Esophagus muscularis mucosa (tissue), 4 donors: ENCODE measurements at regions of chr3 and their contacts with region 1.

Region 1: DNA sequence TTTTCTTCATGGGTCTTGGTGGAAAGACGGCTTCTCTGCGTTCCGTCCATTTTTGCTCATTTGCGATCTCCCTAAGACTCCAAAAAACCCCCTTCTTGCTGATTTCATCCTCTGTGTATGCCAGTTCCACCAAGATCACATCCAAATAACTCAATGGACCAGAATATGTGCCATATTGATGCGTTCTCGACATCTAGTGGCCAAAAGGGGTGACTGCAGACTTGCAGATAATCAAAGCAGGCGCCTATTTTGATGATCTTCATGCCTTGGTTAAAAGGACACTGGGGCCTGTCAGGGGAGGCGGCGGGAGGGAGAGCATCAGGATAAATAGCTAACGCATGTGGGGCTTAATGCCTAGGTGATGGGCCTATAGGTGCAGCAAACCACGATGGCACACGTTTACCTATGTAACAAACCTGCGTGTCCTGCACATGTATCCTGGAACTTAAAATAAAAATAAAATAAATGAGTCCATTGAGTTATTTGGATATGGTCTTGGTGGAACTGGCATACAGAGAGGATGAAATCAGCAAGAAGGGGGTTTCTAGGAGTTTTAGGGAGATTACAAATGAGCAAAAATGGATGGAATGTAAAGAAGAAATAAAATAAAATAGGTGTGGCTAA is 104.2 kb upstream of the RAD18 start:
- DNase-seq: no peak
- H3K4me3 ChIP-seq: no peak overlapping the region
- H3K27ac ChIP-seq: peak overlapping the region in 1 of 4 donors; percentile 36
- H3K4me1 ChIP-seq: peaks cover 7 to 17% (median 12%) of the 10 kb centered on the region in 4 donors
- H3K27me3 ChIP-seq: no peaks in the 10 kb centered on the region
- CTCF ChIP-seq: peak; percentile 82 to 95 (median 92)
- EP300 ChIP-seq: no peak
- POLR2A ChIP-seq: no peak

Region 2: DNA sequence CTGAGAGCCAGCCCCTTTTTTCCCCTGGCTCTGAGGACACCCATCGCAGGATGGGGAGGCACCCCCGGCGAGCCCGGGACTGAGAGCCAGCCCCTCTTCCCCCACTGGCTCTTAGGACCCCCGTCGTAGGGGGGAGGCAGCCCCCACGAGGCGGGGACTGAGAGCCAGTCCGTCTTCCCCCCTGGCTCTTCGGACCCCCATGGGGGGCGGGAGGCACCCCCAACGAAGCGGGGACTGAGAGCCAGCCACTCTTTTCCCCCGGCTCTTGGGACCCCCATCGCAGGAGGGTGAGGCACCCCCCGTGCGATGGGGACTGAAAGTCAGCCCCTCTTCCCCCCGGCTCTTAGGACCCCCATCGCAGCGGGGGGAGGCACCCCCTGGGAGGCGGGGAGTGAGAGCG is 386.1 kb before region 1 on chr3:
- intact Hi-C with region 1: no loop called
- DNase-seq: no peak
- H3K4me3 ChIP-seq: peak overlapping the region in 2 of 4 donors; percentile 5 to 12
- H3K27ac ChIP-seq: no peak overlapping the region
- H3K4me1 ChIP-seq: peaks cover 0 to 8% (median 4%) of the 10 kb centered on the region in 4 donors
- H3K27me3 ChIP-seq: peaks cover 0 to 32% (median 0%) of the 10 kb centered on the region in 4 donors
- CTCF ChIP-seq: no peak
- EP300 ChIP-seq: no peak
- POLR2A ChIP-seq: no peak

Region 3: DNA sequence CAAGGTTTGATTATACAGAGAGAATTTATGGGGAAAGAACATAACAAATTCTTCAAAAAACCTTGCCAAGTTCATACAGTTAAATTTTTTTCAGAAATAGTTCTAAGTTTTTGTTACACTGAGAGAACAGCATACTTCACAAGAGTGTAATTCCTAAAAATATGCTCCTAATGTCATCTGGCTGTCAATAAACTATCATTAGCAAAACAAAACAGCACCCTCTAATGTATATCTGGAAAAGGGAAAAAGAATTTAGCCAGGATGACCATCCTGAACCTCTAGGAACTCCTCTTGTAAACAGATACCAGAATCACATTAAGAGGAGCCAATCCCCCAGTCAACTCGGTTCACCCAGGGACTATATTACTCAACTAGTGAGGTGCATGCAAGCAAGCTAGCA is 167.5 kb before region 1 on chr3:
- intact Hi-C with region 1: no loop called
- DNase-seq: no peak
- H3K4me3 ChIP-seq: no peak overlapping the region
- H3K27ac ChIP-seq: no peak overlapping the region
- H3K4me1 ChIP-seq: no peaks in the 10 kb centered on the region
- H3K27me3 ChIP-seq: no peaks in the 10 kb centered on the region
- CTCF ChIP-seq: no peak
- EP300 ChIP-seq: no peak
- POLR2A ChIP-seq: no peak

Region 4: DNA sequence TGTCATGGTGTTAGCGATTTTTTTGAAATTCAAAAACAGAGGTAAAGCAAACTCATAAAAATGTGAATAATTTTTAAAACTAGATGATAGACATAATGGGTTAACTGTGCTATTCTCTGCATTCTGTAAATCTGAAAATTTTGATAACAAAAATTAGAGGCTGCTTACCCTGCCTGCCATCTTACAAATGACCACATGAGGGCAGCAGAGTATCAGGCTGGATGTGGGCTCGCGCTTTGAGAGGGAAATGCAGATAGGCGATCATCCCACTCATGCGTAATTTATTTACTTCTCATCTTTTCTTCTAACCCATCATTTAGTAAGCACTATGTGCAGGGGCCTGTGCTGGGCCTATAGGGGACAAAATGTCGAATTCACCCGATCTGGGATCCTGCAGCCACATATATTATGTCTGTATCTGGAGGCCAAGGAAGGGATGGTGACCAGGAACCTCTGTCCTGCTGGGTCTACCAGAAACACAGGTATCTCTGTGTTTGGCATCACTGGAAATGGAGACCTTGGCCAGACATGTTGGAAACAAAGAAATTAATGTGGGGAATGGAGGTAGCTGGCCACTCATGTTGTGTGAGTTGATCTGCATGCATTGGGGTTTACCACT is 96.4 kb before region 1 on chr3:
- intact Hi-C with region 1: loop called (anchors 5 kb)
- DNase-seq: peak; percentile 92
- H3K4me3 ChIP-seq: no peak overlapping the region
- H3K27ac ChIP-seq: no peak overlapping the region
- H3K4me1 ChIP-seq: no peaks in the 10 kb centered on the region
- H3K27me3 ChIP-seq: peaks cover 0 to 28% (median 0%) of the 10 kb centered on the region in 4 donors
- CTCF ChIP-seq: peak; percentile 96 to 99 (median 98)
- EP300 ChIP-seq: no peak
- POLR2A ChIP-seq: no peak

Region 5: GRCh38 chr3:8987645-8988383 is 79.7 kb before region 1 on chr3:
- intact Hi-C with region 1: loop called (anchors 5 kb)
- DNase-seq: no peak
- H3K4me3 ChIP-seq: no peak overlapping the region
- H3K27ac ChIP-seq: no peak overlapping the region
- H3K4me1 ChIP-seq: peaks cover 0 to 9% (median 0%) of the 10 kb centered on the region in 4 donors
- H3K27me3 ChIP-seq: no peaks in the 10 kb centered on the region
- CTCF ChIP-seq: peak; percentile 65 to 75 (median 67)
- EP300 ChIP-seq: no peak
- POLR2A ChIP-seq: no peak

Region 6: DNA sequence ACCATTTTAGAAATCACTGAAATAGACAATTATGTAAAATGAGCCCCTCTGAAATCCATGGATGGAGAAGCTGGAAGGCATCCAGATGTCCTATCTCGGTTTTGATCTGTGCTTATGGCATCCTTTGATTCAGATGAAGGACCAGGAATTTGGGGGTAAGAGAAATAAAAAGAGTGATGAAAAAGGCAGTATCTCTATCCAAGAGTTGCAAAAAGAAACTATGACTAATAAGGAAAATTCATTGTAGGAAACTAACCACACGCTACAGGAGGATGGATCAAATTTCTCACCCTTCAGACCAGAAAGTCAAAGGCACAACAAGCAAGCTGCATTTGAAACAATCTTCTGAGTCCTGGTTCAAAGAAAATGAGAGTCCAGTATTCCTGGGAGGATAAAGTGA is 147.1 kb after region 1 on chr3:
- intact Hi-C with region 1: no loop called
- DNase-seq: no peak
- H3K4me3 ChIP-seq: no peak overlapping the region
- H3K27ac ChIP-seq: no peak overlapping the region
- H3K4me1 ChIP-seq: no peaks in the 10 kb centered on the region
- H3K27me3 ChIP-seq: no peaks in the 10 kb centered on the region
- CTCF ChIP-seq: no peak
- EP300 ChIP-seq: no peak
- POLR2A ChIP-seq: no peak

Region 7: DNA sequence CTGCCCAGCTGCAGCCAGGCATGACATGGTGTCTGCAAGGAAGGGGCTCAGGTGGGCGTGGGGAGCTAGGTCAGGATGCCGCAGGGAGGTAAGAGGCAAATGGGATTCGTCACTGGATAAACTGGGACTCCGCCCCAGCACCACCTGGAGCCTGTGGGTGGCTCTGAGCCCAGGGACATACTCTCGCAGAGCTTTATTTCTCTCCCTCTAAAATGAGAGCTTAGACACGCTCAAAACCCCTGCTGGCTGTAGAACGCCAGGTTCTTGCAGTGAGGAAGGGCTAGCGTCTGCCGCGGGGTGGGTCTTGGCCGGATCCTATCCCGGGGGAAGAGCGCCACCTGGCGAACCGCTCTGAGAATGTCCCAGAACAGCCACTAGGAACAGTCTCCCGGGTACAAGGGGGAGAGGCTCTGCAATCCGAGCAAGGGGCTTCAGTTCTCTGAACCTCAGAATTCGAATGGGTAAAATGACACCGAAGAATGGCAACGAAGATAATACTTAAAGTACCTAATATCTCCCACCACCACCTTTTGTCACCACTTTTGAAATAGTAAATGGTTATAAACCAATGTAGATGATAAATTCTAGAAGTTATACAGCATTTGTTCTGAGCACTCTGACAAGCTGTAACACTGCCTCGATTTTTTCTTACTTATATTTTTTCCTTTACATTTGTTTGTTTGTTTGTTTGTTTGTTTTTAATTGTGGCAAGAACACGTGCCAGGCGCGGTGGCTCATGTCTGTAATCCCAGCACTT is 235.1 kb after region 1 on chr3:
- intact Hi-C with region 1: loop called (anchors 2 kb)
- DNase-seq: no peak
- H3K4me3 ChIP-seq: peak overlapping the region; percentile 23 to 50 (median 34)
- H3K27ac ChIP-seq: no peak overlapping the region
- H3K4me1 ChIP-seq: peaks cover 5 to 8% (median 7%) of the 10 kb centered on the region in 4 donors
- H3K27me3 ChIP-seq: no peaks in the 10 kb centered on the region
- CTCF ChIP-seq: peak; percentile 82 to 91 (median 86)
- EP300 ChIP-seq: no peak
- POLR2A ChIP-seq: no peak

Region 8: DNA sequence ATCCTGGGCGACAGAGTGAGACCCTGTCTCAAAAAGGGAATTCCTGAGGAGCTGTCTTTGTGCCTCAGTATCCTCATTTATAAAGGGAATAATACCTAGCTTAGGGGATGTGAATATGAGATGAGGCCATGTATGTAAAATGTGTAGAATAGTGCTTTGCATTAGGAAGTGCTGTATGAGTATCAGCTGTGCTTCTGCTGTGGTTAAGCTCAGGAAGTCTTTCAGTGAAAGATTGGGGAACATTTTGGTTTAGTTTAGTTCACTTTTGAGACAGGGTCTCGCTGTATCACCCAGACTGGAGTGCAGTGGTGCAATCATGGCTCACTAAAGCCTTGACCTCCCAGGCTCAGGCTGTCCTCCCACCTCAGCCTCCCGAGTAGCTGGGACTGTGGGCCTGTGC is 306.0 kb after region 1 on chr3:
- intact Hi-C with region 1: no loop called
- DNase-seq: no peak
- H3K4me3 ChIP-seq: no peak overlapping the region
- H3K27ac ChIP-seq: no peak overlapping the region
- H3K4me1 ChIP-seq: no peaks in the 10 kb centered on the region
- H3K27me3 ChIP-seq: no peaks in the 10 kb centered on the region
- CTCF ChIP-seq: no peak
- EP300 ChIP-seq: no peak
- POLR2A ChIP-seq: no peak